HepG2 (cell line): ENCODE measurements at regions of chr7 and their contacts with region 1.

Region 1: GRCh38 chr7:108459931-108460551 is 3.8 kb upstream of the NRCAM start:
- DNase-seq: peak; percentile 38
- ATAC-seq: peak; percentile 62
- H3K4me3 ChIP-seq: no peak overlapping the region
- H3K27ac ChIP-seq: no peak overlapping the region
- H3K4me1 ChIP-seq: no peaks in the 10 kb centered on the region
- H3K27me3 ChIP-seq: peaks cover 4 to 34% of the 10 kb centered on the region in 2 experiments
- CTCF ChIP-seq: peak; percentile 71
- EP300 ChIP-seq: no peak
- POLR2A ChIP-seq: no peak
- RAD21 ChIP-seq: peak; percentile 52

Region 2: DNA sequence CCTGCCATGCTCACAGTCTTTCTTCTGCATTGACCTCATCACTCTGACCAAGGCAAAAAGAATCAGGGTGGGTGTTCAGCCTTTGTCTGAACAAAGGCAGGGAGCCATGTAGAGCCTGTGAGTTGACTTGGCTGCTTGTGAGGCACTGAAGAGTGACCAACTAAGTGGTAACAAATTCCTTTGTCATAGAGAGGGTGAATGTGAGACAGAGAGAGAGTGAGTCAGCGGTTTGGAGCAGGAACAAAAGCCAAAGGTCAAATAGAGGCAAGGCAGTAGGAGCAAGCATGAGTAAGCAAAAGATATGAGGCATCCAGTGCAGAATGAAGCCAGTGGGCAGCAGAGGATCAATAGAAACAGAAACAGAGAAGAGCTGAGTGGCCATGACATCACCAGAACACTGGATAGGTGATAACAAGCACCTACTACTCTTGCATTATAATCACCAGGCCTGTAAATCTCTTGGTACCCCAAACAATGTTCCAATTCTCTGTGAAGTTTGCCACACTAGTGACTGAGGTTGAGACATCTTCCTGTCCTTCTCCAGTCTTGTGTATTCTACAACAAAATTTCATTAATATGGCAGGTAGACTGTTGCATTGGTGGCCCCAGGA is 213.7 kb before region 1 on chr7:
- CTCF ChIA-PET with region 1: no interaction called
- POLR2A ChIA-PET with region 1: no interaction called
- in situ Hi-C with region 1: no loop called
- intact Hi-C with region 1: loop called (anchors 10 kb)
- DNase-seq: peak; percentile 80
- ATAC-seq: peak; percentile 92
- H3K4me3 ChIP-seq: no peak overlapping the region; a peak in 1 of 6 replicates
- H3K27ac ChIP-seq: no peak overlapping the region
- H3K4me1 ChIP-seq: peaks cover 46% of the 10 kb centered on the region
- H3K27me3 ChIP-seq: no peaks in the 10 kb centered on the region
- CTCF ChIP-seq: peak; percentile 50
- EP300 ChIP-seq: no peak
- POLR2A ChIP-seq: no peak
- RAD21 ChIP-seq: no peak